ENCODE measurements at regions of chr9 and their contacts with region 1.

Region 1: DNA sequence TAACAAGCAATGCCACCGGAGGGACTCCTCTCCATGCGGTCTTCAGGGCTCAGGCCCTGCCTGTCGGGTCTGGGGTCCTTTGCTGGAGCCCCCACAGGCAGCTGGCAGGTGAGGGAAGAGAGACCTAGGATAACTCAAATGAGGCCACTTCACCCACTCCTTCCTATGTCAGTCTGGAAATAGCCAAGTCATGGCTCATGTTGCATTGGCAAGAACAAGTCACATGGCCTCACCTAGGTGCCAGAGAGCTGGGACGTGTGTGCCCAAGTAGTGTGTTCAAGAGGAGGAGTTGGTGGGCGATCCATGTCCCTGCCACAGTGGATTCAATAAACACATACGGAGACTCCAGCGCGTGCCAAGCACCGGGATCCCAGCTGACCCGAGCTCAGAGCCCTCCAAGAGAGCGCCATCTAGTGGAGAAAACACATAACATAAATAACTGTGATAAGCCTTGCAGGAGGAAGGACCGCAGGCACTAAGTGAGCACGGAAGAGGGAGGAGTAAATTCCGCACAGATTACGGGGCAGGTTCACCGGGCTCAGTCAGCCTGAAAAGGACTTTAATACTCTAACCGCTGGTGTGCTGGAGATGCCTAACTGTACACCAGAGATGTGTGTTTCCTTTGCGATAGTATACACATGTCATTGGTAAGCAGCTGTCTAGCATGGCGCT is 580.8 kb downstream of the CCDC171 start:
- DNase-seq: peak; percentile 62
- CTCF ChIP-seq: peak; percentile 54

Region 2: GRCh38 chr9:15873569-15874177 is 260.0 kb before region 1 on chr9:
- CTCF ChIA-PET with region 1: interaction called, 41 read pairs
- POLR2A ChIA-PET with region 1: no interaction called
- DNase-seq: peak; percentile 7
- CTCF ChIP-seq: peak; percentile 62

Region 3: DNA sequence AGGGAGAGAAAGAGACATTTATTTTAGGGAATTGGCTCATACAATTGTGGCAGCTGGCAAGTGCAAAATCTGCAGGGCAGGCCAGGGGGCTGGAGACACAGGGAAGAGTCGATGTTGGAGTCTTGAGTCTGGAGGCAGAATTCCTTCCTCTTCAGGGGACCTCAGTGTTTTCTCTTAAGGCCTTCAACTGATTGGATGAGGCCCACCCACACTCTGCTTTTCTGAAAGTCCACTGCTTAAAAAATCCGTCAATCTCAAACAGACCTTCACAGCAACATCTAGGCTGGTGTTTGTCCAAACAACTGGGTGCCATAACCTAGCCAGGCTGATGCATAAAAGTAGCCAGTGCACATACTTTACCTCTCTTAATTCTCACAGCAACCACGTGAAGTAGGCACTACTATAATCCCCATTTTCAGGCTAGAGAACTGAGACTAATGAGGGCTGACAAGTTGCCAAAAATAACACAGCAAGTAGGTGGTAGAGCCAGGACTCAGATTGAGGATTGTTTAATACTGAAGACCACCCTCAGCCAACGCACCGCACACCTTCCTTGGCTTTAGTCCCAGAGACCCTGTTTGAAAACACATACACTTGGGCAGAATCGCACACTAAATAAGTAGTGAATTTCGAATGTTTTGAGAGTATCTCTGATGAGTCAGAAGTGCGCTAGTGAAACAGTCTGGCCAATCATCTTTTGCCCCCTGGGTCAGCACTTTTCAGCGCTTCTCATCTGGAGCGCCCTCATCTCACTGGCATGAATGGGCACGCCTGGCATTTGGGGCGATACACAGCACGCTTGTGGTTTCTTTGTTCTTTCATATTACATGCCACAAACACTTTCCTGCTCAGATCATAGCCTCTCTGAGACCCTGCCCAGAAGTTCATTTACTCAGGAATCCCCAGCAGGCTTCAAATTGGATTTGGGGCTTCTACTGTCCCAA is 10.5 kb after region 1 on chr9:
- CTCF ChIA-PET with region 1: interaction called, 19 read pairs
- POLR2A ChIA-PET with region 1: no interaction called
- DNase-seq: no peak
- CTCF ChIP-seq: no peak

Region 4: DNA sequence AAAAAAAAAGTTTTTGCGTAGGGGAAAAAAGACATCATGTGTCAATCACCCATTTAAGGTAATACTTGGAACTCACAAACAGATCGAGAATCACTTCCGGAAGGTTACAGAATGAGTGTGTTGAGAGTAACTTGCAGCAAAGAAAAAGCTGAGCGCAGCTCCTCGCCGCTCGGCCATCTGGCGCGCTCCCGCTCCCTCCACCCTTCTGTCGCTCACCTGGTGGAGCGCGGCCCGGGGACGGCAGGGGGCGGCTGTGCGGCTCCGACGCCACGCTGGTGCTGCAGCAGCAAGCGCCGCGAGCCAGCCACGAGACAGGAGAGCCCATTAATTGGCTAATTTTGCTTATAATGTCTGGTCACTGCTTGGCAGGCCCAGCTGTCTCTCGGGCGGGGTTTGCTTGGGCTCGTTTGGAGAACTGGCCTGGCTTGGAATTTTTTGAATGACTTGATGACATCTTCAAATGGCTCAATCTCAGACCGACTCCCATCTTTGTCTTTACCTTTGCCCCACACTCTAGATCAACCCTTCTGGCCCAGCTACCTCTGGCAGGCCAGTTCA is 20.9 kb after region 1 on chr9:
- CTCF ChIA-PET with region 1: interaction called, 20 read pairs
- POLR2A ChIA-PET with region 1: no interaction called
- DNase-seq: peak; percentile 21
- CTCF ChIP-seq: no peak

Region 5: DNA sequence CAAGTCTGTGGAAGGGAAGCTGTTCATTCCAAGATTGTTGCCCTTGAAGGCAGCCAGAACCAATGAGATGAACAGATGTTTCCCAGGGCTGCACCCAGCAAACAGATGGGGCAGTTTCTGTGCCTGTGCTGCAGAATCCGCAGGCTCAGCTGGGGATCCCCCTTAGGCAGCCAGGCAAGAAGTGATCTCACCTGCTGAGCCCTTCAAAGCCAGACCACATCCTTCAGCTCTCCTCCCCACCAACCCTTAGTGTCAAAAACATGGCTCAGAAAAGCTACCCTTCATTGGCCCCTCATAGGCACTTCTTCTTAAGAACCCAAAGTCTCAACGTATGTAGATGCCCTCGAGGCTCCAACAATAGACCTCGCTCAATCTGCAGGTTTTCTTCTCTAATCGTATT is 45.9 kb after region 1 on chr9:
- CTCF ChIA-PET with region 1: no interaction called
- POLR2A ChIA-PET with region 1: no interaction called
- DNase-seq: peak; percentile 30
- CTCF ChIP-seq: no peak

Measured in GM10248 (cell line).